ENCODE measurements at regions of chr19 and their contacts with region 1.

Region 1: GRCh38 chr19:11766597-11767591 is at the start of gene ZNF441:
- DNase-seq: peak; percentile 96 to 98
- H3K4me3 ChIP-seq: peak within 1 kb of the TSS; percentile 80 to 91 (median 89)
- H3K27ac ChIP-seq: peak within 1 kb of the TSS; percentile 96 to 99
- H3K4me1 ChIP-seq: peaks cover 2 to 3% of the 10 kb centered on the region in 2 donors
- H3K27me3 ChIP-seq: no peaks in the 10 kb centered on the region
- CTCF ChIP-seq: peak in 1 of 3 donors; percentile 5
- POLR2A ChIP-seq: peak; percentile 23
- total RNA-seq, gene ZNF441: 7.7 to 17.6 (median 10.2) TPM

Region 2: DNA sequence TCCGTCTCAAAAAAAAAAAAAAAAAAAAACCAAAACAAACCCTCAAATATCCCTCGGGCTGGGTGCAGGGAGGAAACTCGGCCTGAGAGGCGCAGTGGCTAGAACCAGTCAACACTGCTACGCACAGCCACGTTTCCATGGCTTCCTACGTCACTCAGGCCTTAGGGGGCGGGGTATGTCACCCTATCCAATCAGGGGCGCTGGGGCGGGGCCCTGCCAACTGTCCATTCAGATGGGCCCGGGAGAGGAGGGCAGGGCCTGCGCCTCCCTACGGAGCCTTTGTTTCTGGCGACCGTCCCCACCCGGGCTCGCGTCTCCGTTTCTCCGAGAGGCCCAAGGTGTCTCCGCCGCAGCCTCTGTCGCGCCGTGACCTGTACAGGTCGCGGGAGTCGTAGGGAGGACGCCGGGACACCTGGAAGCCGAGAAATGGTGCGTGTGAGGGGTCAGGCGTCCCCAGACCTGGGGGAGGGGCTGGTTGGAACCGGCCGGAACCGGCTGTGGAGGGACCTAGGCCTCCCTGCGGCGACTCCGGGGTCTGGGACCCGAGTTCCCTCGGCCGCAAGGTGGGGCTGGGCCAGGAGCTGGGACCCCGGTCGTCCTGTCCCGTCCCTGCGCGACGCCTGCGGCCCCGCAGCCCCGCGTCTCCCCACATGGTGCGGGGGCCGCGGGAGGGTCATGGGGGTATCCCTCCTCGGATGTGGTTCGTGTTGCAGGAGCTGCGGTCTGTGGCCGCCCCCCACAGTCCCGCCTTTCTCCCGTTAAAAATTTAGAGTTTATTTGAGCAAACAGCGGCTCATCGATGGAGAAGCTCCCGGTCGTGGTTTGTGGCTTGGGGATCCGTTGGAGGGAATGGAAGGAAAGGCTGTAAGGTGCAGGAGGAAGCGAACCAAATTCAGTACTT is 169.4 kb before region 1 on chr19 and contains the start of gene ZNF627:
- intact Hi-C with region 1: no loop called
- DNase-seq: peak; percentile 99 to 100
- H3K4me3 ChIP-seq: peak within 1 kb of the TSS; percentile 90 to 98 (median 90)
- H3K27ac ChIP-seq: peak within 1 kb of the TSS; percentile 96 to 97
- H3K4me1 ChIP-seq: peaks cover 0 to 5% of the 10 kb centered on the region in 2 donors
- H3K27me3 ChIP-seq: no peaks in the 10 kb centered on the region
- CTCF ChIP-seq: peak; percentile 17 to 41 (median 19)
- POLR2A ChIP-seq: peak; percentile 93
- total RNA-seq, gene ZNF627: 8.5 to 35.4 (median 23.3) TPM

Region 3: DNA sequence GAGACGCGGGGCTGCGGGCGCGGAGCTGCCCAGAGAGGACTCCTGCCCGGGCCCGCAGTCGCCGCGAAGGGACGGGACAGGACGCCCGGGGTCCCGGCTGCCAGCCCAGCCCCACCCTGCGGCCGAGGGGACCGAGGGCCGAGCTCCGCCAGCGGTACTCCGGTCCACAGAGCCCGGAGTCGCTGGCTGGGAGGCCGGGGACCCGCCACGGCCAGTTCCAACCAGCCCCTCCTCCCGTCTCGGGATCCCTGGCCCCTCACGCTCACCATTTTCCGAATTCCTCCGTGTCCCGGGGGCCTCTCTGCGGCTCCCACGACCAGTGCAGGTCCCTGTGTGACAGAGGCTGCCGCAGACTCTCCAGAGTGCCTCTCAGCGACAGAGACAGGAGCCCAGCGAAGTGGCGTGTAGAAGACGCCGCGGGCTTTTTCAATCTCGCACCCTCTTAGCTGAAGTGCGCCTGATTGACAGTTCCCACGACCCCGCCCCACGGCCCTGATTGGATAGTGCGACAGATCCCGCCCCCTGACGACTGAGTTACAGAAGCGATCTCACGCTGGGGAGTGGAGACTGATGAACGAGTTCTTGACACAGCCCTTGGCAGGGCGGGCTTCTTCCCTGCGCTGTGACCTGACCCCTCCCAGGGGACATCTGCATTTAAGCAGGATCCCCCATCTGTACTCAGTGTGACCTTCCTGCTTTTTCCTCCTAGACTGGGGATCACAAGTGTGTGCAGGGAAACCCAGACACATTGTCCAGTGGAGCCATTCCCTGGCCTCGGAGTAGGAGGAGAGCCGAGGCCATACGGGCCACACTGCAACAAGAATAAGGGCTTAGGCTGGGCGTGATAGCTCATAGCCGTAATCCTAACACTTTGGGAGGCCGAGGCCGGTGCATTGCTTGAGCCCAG is 72.1 kb before region 1 on chr19:
- intact Hi-C with region 1: no loop called
- DNase-seq: peak; percentile 94 to 98
- H3K4me3 ChIP-seq: peak overlapping the region; percentile 72 to 86 (median 79)
- H3K27ac ChIP-seq: peak overlapping the region; percentile 79 to 84
- H3K4me1 ChIP-seq: peaks cover 0 to 7% of the 10 kb centered on the region in 2 donors
- H3K27me3 ChIP-seq: no peaks in the 10 kb centered on the region
- CTCF ChIP-seq: no peak
- POLR2A ChIP-seq: no peak

Region 4: GRCh38 chr19:11781295-11782052 is 14.6 kb after region 1 on chr19:
- intact Hi-C with region 1: no loop called
- DNase-seq: no peak
- H3K4me3 ChIP-seq: peak overlapping the region in 1 of 3 donors; percentile 0
- H3K27ac ChIP-seq: no peak overlapping the region
- H3K4me1 ChIP-seq: no peaks in the 10 kb centered on the region
- H3K27me3 ChIP-seq: no peaks in the 10 kb centered on the region
- CTCF ChIP-seq: no peak
- POLR2A ChIP-seq: no peak

Region 5: DNA sequence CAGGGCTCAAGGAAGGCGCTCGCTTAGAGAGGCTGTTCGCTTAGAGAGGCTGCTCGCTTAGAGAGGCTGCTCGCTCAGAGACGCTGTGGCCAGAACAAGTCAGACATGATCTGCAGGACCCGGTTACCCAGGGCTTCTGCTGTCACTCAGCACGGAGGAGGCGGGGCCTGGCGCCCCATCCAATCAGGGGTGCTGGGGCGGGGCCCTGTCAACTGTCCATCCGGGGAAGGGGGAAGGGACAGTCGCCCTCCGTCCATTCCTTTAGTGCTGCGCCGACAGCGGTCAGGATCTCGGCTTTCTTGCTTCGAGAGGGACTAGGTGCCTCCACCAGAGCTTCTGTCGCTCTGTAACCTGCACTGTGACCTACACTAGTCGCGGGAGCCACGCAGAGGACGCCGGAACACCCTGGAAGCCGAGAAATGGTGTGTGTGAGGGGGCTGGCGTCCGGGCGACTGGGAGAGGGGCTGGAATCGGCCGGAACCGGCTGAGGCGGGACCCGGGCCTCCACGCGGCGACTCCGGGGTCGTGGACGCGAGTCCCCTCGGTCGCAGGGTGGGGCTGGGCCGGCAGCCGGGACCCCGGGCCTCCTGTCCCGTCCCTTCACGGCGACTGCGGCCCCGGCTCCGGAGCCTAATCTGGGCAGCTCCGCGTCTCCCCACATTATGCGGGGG is 47.3 kb after region 1 on chr19 and contains the start of gene ZNF440:
- intact Hi-C with region 1: loop called (anchors 2 kb)
- DNase-seq: peak; percentile 96 to 97
- H3K4me3 ChIP-seq: peak within 1 kb of the TSS; percentile 66 to 91 (median 84)
- H3K27ac ChIP-seq: peak within 1 kb of the TSS; percentile 92 to 98
- H3K4me1 ChIP-seq: no peaks in the 10 kb centered on the region
- H3K27me3 ChIP-seq: no peaks in the 10 kb centered on the region
- CTCF ChIP-seq: no peak
- POLR2A ChIP-seq: peak; percentile 85
- total RNA-seq, gene ZNF440: 9.8 to 16.4 (median 16.0) TPM

Region 6: DNA sequence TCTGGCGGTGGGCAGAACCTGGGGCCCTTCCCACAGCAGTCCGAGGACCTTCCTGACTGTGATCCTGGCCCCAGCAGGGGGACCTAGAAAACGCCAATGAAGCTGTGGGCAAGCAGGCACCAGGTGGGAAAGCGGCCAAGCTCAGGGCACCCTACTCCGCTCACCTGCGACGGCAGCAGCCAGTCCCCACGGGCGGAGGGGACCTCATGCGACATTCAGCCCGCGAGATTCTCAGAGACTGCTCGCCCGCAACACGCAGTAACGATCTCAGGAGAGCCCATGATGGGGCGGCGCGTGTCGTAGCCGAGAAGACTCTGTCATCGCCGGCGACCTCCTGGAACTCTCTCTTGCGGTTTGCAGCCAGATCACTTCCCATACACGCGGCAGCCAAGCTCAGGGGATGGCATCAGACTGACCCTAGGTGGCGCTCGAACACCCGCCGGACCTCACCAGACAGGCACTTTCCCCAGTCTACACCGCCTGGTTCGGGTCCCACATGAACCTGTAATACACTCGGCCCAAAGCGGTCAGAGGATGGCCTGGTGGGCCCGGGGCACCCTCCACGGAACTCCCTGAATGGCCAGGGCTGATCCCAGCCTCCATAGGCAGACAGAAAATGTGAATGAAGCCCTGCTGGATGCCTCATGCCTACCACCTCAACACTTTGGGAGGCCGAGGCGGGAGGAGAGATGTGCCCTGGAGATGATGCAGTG is 873.2 kb after region 1 on chr19:
- intact Hi-C with region 1: loop called (anchors 5 kb)
- DNase-seq: peak; percentile 64 to 80
- H3K4me3 ChIP-seq: peak overlapping the region in 2 of 3 donors; percentile 24 to 62
- H3K27ac ChIP-seq: peak overlapping the region in 1 of 2 donors; percentile 7
- H3K4me1 ChIP-seq: no peaks in the 10 kb centered on the region
- H3K27me3 ChIP-seq: no peaks in the 10 kb centered on the region
- CTCF ChIP-seq: peak; percentile 27 to 66 (median 55)
- POLR2A ChIP-seq: no peak

Measured in breast epithelium (tissue), 4 donors.